Prostate gland (tissue), 2 donors: ENCODE measurements at regions of chr15 and their contacts with region 1.

Region 1: GRCh38 chr15:65318870-65319356 is 14.4 kb downstream of the RNU5B-1 start:
- DNase-seq: peak; percentile 71
- H3K4me3 ChIP-seq: no peak overlapping the region
- H3K27ac ChIP-seq: no peak overlapping the region
- H3K4me1 ChIP-seq: no peaks in the 10 kb centered on the region
- H3K27me3 ChIP-seq: no peaks in the 10 kb centered on the region
- CTCF ChIP-seq: peak; percentile 50 to 97 (median 94)
- POLR2A ChIP-seq: no peak

Region 2: DNA sequence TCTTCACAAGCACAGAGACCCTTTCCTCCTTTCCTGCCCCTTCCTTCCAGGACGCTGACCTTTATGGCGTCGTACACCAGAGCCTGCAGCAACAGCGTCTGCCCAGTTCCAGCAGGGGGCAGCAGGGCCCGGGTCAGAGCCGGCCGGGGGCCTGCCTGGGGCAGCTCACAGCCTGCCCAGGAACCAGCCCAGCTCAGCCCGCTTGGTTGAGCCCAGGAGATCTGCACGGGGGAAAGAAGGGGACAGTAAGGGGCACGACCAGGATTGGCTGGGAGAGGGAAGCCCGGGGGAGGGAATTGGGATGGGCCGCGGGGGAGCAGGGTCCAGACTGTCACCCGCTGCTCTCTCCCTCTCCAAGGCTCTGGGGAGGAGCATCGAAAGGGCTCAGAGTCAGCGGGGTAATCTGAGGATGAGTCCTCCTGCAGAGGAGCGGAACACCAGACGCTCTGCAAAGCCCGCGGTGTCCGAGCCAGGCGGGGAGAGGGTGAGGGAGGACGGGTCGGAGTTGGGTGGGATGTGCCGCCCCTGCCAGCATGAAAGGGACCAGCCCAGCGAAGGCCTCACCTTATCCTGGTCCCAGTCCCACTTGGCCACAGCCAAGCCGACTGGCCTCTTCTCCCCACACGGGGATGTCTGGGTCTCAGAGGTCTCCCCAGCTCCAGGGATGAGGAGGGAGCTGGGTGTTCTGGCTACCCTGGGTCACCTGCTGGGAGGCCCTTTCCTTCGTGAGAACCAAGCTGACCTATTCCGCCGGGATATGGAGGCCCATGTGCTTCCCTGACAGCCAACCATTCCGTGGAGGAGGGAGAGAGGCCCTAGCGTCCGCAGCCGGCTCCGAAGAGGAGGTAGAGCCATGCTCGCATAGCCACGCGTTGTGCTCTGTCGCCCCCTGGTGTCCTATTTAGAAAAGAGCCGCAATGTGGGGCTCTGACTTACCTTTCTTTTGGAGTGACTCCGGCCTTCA is 66.3 kb after region 1 on chr15:
- intact Hi-C with region 1: loop called (anchors 1 kb)
- DNase-seq: peak; percentile 81
- H3K4me3 ChIP-seq: peak overlapping the region; percentile 2 to 10
- H3K27ac ChIP-seq: no peak overlapping the region
- H3K4me1 ChIP-seq: peaks cover 5% of the 10 kb centered on the region
- H3K27me3 ChIP-seq: no peaks in the 10 kb centered on the region
- CTCF ChIP-seq: peak; percentile 66 to 95 (median 91)
- POLR2A ChIP-seq: no peak

Region 3: DNA sequence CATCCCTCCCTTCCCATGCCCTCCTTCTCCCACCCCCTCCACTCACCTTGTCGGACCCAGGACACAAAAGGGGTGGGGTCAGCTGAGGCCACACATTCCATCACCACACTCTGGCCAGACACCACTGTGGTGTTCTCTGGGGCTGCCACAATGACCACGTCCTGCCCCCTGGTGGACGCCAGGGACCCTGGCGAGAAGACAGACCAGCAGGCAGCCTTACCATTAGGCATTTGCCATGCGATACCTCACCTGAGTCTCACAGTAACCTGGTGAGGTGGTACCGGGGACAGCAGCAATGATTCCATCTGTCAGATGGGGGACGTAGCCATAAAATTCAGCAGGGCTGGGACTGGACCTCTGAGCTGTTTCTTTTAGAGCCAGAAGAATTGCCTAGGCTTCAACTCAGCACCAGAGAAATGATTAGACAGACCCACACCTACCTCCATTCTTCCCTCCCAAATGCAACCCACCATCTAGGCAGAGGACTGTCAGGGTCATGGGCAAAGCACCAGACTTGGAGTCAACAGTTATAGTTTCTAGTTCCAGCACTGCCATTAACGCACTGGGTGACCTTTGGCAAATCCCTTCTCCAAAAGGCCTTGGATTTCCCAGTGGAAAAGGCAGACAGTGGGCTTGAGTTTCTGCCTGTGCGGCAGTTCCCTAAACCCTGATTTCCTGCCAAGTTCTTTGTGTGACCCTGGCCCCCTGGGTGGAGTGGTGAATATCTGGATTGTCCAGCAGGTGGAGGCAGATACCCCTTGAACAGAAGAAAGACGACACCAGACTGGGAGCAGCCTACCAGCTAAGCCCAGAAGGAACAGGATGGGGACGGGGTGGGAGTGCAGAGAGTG is 82.1 kb after region 1 on chr15:
- intact Hi-C with region 1: loop called (anchors 5 kb)
- DNase-seq: no peak
- H3K4me3 ChIP-seq: no peak overlapping the region
- H3K27ac ChIP-seq: no peak overlapping the region
- H3K4me1 ChIP-seq: no peaks in the 10 kb centered on the region
- H3K27me3 ChIP-seq: peaks cover 9% of the 10 kb centered on the region
- CTCF ChIP-seq: peak in 3 of 4 experiments; percentile 34 to 56 (median 38)
- POLR2A ChIP-seq: no peak

Region 4: GRCh38 chr15:65646486-65646885 is 327.6 kb after region 1 on chr15:
- intact Hi-C with region 1: no loop called
- DNase-seq: no peak
- H3K4me3 ChIP-seq: no peak overlapping the region
- H3K27ac ChIP-seq: no peak overlapping the region
- H3K4me1 ChIP-seq: no peaks in the 10 kb centered on the region
- H3K27me3 ChIP-seq: no peaks in the 10 kb centered on the region
- CTCF ChIP-seq: no peak
- POLR2A ChIP-seq: no peak

Region 5: GRCh38 chr15:66023311-66023972 is 704.5 kb after region 1 on chr15:
- intact Hi-C with region 1: no loop called
- DNase-seq: no peak
- H3K4me3 ChIP-seq: no peak overlapping the region
- H3K27ac ChIP-seq: no peak overlapping the region
- H3K4me1 ChIP-seq: no peaks in the 10 kb centered on the region
- H3K27me3 ChIP-seq: no peaks in the 10 kb centered on the region
- CTCF ChIP-seq: no peak
- POLR2A ChIP-seq: no peak